ENCODE measurements at regions of chr4 and their contacts with region 1.

Region 1: GRCh38 chr4:174365018-174365587 is 81.4 kb downstream of the CEP44 start:
- DNase-seq: peak in 1 of 3 donors; percentile 22
- ATAC-seq: no peak
- H3K4me3 ChIP-seq: no peak overlapping the region
- H3K4me1 ChIP-seq: no peaks in the 10 kb centered on the region
- CTCF ChIP-seq: no peak

Region 2: DNA sequence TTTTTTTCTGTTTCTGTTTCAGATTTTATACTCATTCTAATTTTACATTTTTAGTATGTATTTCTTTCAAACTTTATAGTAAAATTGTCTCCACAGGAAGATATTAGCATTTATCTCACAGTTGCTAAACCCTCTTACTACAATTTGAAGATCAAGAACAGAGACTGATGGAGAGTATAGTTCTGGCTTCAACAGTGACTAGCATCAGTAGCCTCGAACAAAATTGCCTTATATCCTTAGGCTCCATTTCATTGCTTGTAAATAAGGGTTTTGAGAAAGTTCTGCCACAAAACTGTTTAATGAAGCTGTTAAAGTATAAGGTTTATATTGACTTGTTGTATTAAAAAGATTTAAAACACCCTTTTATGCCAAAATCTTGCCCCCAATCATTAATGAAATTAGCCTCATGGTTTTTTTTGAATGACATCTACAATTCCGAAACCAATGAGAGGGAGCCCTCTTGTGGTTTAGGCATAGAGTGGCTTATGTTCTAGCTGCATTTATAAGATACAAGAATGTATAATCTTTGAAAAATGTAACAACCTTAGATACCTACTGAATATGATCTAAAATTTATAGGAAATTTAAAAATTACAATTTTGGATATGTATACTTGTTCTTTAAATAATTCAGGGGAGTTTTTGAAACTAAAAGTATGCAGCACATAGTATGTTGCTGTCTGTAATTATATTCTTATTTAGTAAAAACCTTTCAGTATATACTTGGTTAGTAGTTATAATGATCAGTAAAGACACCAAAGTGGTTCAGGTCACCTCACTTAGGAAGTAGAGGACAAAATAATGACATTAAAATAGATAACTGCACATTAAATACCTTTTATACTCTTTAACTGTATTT is 267.0 kb after region 1 on chr4:
- intact Hi-C with region 1: loop called (anchors 2 to 5 kb)
- DNase-seq: peak in 1 of 3 donors; percentile 20
- ATAC-seq: peak; percentile 62
- H3K4me3 ChIP-seq: no peak overlapping the region
- H3K4me1 ChIP-seq: no peaks in the 10 kb centered on the region
- CTCF ChIP-seq: peak; percentile 44

Measured in mucosa of descending colon (tissue), 3 donors.